SK-N-SH (cell line): ENCODE measurements at regions of chr7 and their contacts with region 1.

Region 1: DNA sequence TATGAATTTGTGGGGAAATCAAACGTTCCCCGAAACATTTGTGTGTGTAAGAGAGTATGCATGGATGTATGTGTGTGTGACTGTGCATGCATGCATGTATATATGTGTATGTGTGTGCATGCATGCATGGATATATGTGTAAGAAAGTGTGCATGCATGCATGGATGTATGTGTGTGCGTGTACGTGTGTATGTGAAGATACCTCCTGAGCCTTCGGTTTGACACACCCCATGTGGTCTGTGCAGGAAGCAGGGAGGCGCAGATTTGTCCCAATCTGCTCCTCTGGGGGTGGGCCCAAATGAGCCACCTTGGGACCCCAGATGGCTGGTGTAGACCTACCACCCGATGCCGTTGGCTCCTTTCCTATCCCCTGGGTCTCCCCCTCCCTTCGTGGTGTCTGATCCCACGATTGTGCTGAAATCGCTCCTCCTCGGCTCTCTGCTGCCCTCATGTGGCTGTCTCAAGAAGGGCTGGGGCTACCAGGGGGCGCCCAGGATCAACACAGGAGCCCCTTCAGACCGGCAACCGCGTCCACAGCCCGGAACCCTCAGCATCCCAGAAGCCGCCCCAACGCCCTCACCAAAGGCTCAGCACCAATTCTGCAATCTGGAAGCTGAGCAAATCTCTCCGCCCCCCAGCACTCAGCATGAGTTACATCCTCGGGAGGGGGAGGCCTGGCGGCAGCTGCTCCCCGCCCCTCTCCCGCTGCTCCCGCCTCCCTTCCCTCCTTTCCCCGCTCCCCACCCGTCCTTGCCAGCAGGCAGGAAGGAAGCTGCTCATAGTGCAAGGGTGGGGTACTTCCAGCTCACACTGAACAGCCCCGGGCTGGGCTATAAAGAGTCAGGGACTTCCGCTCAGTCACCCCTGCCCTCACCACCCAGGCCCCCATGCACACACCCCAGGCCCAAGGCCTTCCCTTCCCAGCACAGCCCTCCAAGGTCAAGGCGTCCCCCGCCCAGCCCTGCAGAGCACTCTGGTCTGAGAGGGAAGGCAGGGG is 2.3 kb upstream of the NOS3 start:
- DNase-seq: peak; percentile 95
- H3K4me3 ChIP-seq: peak overlapping the region; percentile 13 to 46; a peak in 2 of 4 replicates
- H3K27ac ChIP-seq: peak overlapping the region in 1 of 2 experiments; percentile 86; a peak in 2 of 4 replicates
- H3K4me1 ChIP-seq: peaks cover 0 to 32% of the 10 kb centered on the region in 2 experiments; a peak in 2 of 4 replicates
- H3K27me3 ChIP-seq: peaks cover 13% of the 10 kb centered on the region; the same call in 1 of the 2 replicates
- CTCF ChIP-seq: peak; percentile 97
- EP300 ChIP-seq: no peak
- RAD21 ChIP-seq: peak; percentile 92

Region 2: DNA sequence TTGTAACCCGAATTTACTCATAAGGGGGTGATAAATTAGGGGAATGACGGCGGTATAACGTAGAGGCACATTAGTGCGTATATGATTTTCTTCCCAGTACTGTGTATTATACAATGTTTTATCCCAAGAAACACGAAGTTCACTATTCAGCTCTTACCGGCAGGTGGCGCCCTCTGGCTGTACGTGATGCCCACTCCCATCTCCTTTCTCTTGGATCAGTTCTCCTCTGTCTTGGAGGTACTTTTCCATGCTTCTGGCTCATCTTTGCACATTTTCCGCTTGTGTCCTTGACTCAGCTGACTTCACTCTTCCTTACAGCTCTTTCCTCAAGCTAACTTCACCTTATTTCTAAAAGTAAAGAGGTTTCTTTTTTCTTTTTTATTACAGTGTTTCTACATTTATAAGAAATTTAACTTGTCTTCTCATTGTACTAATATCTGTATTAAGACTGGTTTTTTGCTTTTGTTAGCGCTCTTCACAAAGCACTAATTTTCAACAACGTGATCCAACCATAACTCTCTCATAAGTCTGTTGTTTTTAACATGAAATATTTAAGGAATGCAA is 209.7 kb before region 1 on chr7:
- CTCF ChIA-PET with region 1: interaction called, 21 read pairs
- POLR2A ChIA-PET with region 1: no interaction called
- DNase-seq: peak; percentile 78
- H3K4me3 ChIP-seq: no peak overlapping the region; a peak in 1 of 4 replicates
- H3K27ac ChIP-seq: 0 out of 4 replicates have a peak overlapping the region, but pooled peaks of 1 of the 2 experiments have one; percentile 7
- H3K4me1 ChIP-seq: peaks cover 0 to 6% of the 10 kb centered on the region in 2 experiments; a peak in 2 of 4 replicates
- H3K27me3 ChIP-seq: no peaks in the 10 kb centered on the region; the same call in 1 of the 2 replicates
- CTCF ChIP-seq: peak; percentile 99
- EP300 ChIP-seq: no peak
- RAD21 ChIP-seq: peak; percentile 100

Region 3: GRCh38 chr7:150876817-150877526 is 111.6 kb before region 1 on chr7:
- CTCF ChIA-PET with region 1: interaction called, 38 read pairs
- POLR2A ChIA-PET with region 1: no interaction called
- DNase-seq: peak; percentile 91
- H3K4me3 ChIP-seq: no peak overlapping the region
- H3K27ac ChIP-seq: peak overlapping the region in 1 of 2 experiments; percentile 60; a peak in 2 of 4 replicates
- H3K4me1 ChIP-seq: peaks cover 5% of the 10 kb centered on the region in 2 experiments; a peak in 2 of 4 replicates
- H3K27me3 ChIP-seq: no peaks in the 10 kb centered on the region
- CTCF ChIP-seq: peak; percentile 58
- EP300 ChIP-seq: no peak
- RAD21 ChIP-seq: peak; percentile 69

Region 4: DNA sequence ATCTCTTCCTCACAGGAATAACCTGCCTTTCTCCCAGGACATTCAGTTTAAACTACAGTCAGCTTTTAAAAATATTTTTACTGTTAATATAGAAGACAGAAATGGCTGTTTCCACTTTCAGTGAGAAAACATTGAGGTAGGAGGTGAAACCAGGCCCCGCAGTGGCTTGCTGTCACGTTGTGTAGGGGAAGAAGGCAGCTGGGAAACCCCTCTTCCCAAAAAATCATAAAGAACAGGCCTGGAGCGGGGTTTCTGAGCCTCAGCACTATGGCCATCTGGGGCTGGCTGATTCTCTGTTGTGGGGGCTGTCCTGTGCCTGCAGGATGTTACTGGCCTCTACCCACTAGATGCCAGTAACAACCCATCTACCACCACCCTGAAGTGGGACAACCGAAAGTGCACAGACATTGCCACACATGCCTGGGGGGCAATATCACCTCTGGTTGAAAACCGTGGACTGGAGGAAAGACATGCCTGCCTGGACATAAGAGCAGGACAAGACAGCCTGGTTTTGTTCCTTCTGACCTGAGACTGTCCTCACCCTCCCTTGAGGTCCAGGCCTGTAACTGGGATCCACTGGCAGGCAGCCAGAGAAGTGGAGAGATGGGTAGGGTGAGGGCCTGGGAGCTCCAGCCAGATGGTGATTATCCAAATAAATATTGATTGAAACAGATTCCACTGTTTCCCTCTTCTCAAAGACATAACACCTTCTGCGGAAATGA is 54.3 kb before region 1 on chr7:
- CTCF ChIA-PET with region 1: interaction called, 24 read pairs
- POLR2A ChIA-PET with region 1: no interaction called
- DNase-seq: peak; percentile 71
- H3K4me3 ChIP-seq: no peak overlapping the region
- H3K27ac ChIP-seq: peak overlapping the region in 1 of 2 experiments; percentile 75; a peak in 2 of 4 replicates
- H3K4me1 ChIP-seq: peaks cover 0 to 49% of the 10 kb centered on the region in 2 experiments; a peak in 2 of 4 replicates
- H3K27me3 ChIP-seq: peaks cover 25% of the 10 kb centered on the region; the same call in 1 of the 2 replicates
- CTCF ChIP-seq: no peak
- EP300 ChIP-seq: peak in 1 of 2 experiments; percentile 34; a peak in 1 of 4 replicates
- RAD21 ChIP-seq: peak; percentile 74

Region 5: DNA sequence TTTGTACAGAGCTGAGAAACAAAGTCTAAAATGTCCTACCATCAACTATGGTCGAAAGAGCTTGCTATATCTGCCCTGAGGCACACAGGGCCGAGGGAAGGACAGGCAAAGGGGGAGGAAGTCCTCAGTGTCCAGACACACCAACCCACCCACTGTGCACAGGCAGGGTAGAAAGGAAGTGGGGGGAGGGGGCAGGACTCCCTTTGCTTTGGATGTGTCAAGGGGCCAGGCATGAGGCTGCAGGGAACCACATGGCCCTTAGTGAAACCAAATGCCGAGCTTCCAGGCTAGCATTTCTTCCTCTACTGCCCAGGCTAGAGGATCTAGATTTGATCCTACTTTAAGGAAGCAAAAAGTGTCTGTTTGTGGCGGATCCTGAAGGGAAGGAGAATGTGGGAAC is 39.0 kb before region 1 on chr7:
- CTCF ChIA-PET with region 1: interaction called, 761 read pairs
- POLR2A ChIA-PET with region 1: interaction called, 11 read pairs
- DNase-seq: peak; percentile 88
- H3K4me3 ChIP-seq: no peak overlapping the region
- H3K27ac ChIP-seq: peak overlapping the region in 1 of 2 experiments; percentile 89; a peak in 2 of 4 replicates
- H3K4me1 ChIP-seq: peaks cover 0 to 92% of the 10 kb centered on the region in 2 experiments; a peak in 2 of 4 replicates
- H3K27me3 ChIP-seq: peaks cover 6% of the 10 kb centered on the region; the same call in 1 of the 2 replicates
- CTCF ChIP-seq: no peak
- EP300 ChIP-seq: peak in 1 of 2 experiments; percentile 65; a peak in 1 of 4 replicates
- RAD21 ChIP-seq: peak; percentile 20

Region 6: GRCh38 chr7:150962553-150963399 is 25.8 kb before region 1 on chr7:
- CTCF ChIA-PET with region 1: interaction called, 761 read pairs
- POLR2A ChIA-PET with region 1: interaction called, 5 read pairs
- DNase-seq: peak; percentile 94
- H3K4me3 ChIP-seq: peak overlapping the region in 1 of 2 experiments; percentile 48; a peak in 1 of 4 replicates
- H3K27ac ChIP-seq: peak overlapping the region in 1 of 2 experiments; percentile 97; a peak in 2 of 4 replicates
- H3K4me1 ChIP-seq: peaks cover 0 to 89% of the 10 kb centered on the region in 2 experiments; a peak in 2 of 4 replicates
- H3K27me3 ChIP-seq: peaks cover 16% of the 10 kb centered on the region
- CTCF ChIP-seq: peak; percentile 95
- EP300 ChIP-seq: peak in 1 of 2 experiments; percentile 39; a peak in 1 of 4 replicates
- RAD21 ChIP-seq: peak; percentile 94

Region 7: GRCh38 chr7:150999497-151000230 is 11.1 kb after region 1 on chr7:
- CTCF ChIA-PET with region 1: interaction called, 151 read pairs
- POLR2A ChIA-PET with region 1: interaction called, 3 read pairs
- DNase-seq: peak; percentile 19
- H3K4me3 ChIP-seq: no peak overlapping the region
- H3K27ac ChIP-seq: no peak overlapping the region
- H3K4me1 ChIP-seq: peaks cover 0 to 5% of the 10 kb centered on the region in 2 experiments; a peak in 1 of 4 replicates
- H3K27me3 ChIP-seq: no peaks in the 10 kb centered on the region
- CTCF ChIP-seq: no peak
- EP300 ChIP-seq: no peak
- RAD21 ChIP-seq: no peak

Region 8: DNA sequence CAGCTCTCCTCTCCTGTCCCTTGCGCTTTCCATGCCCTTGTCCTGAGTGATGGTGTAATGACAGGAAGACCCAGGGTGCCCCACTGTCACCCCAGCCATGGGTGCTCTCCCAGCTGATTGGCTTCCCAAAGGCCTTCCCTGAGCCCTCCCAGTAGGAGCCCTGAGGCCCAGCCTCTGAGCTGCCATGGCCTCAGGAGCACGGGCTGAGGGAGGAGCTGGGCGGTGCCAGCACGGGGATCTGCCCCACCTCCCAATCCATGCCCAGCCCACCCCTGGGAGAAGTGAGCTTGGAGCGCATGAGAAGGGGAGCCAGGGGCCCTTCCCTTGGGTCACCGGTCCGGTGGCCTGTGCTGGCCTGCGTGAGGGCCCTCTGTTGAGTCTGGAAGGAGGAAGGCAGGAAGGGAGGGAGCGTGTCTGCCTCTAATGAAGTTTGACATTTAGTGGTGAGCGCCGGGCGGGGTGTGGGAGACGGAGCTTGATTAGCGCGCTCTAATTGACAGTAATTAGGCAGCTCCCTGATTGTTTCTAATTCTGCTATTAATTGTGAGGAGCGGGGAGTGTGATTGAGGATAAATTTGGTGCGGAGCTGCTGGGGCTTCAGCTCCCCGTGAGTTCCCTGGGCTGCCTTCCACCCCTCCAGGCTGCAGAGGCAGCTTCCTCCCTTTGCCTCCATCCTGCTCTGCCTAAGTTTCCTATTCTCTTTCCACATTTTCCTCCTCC is 150.7 kb after region 1 on chr7:
- CTCF ChIA-PET with region 1: no interaction called
- POLR2A ChIA-PET with region 1: no interaction called
- DNase-seq: peak; percentile 53
- H3K4me3 ChIP-seq: no peak overlapping the region
- H3K27ac ChIP-seq: no peak overlapping the region
- H3K4me1 ChIP-seq: peaks cover 0 to 14% of the 10 kb centered on the region in 2 experiments; a peak in 1 of 4 replicates
- H3K27me3 ChIP-seq: no peaks in the 10 kb centered on the region
- CTCF ChIP-seq: no peak
- EP300 ChIP-seq: no peak
- RAD21 ChIP-seq: no peak